ENCODE measurements at regions of chr11 and their contacts with region 1.

Region 1: GRCh38 chr11:93225662-93226061 is 27.9 kb upstream of the SLC36A4 start:
- H3K4me3 Mint-ChIP-seq: no peak overlapping the region
- H3K27ac Mint-ChIP-seq: no peak overlapping the region
- H3K4me1 Mint-ChIP-seq: peaks cover 5% of the 10 kb centered on the region
- H3K27me3 Mint-ChIP-seq: no peaks in the 10 kb centered on the region

Region 2: GRCh38 chr11:92941676-92942571 is 283.7 kb before region 1 on chr11:
- intact Hi-C with region 1: loop called (anchors 1 kb)
- H3K4me3 Mint-ChIP-seq: no peak overlapping the region
- H3K27ac Mint-ChIP-seq: no peak overlapping the region
- H3K4me1 Mint-ChIP-seq: no peaks in the 10 kb centered on the region
- H3K27me3 Mint-ChIP-seq: peaks cover 3% of the 10 kb centered on the region

Region 3: DNA sequence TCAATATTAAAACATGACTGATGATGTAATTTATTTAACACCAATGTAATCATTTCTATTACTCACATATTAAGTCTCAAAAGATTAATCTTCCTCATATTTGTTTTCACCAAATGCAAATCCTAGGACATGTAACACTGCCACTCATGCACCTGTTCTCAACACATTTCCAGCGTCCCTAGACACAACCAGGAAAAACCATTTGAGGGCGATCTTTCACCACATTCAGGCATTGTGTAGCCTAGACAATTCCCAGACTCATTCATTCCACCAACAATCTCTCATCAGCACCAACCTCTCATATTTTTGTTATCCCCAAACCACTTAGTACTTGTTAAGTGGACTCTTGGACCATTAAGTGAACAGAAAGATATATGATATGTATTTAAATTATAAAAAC is 94.0 kb before region 1 on chr11:
- intact Hi-C with region 1: loop called (anchors 10 kb)
- H3K4me3 Mint-ChIP-seq: no peak overlapping the region
- H3K27ac Mint-ChIP-seq: no peak overlapping the region
- H3K4me1 Mint-ChIP-seq: no peaks in the 10 kb centered on the region
- H3K27me3 Mint-ChIP-seq: peaks cover 4% of the 10 kb centered on the region

Measured in dendritic cell treated with granulocyte-macrophage colony-stimulating factor and Interleukin-4, amounts not matched to agents 40 ng/mL and 50 ng/mL, for 4 days (primary cell).